Psoas muscle (tissue), 8 donors: ENCODE measurements at regions of chr18 and their contacts with region 1.

Region 1: DNA sequence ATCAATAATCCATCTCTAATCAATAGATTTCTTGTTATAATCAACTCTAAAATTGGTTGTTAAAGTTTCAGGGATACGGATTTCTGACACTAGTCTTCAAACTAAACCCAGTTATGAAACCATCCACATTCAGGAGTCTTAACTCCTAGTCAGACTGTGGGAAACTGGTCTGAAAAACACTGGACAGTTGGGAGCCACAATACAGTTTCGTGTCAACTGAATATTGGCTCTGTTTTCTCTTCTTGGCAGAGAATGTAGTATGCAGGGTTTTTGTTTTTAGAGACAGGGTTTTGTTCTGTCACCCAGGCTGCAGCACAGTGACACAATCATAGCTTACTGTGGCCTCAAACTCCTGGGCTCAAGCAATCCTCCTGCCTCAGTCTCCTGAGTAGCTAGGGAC is 123.1 kb downstream of the RTTN start:
- DNase-seq: no peak
- ATAC-seq: no peak
- H3K4me3 ChIP-seq: no peak overlapping the region
- H3K27ac ChIP-seq: no peak overlapping the region
- H3K4me1 ChIP-seq: no peaks in the 10 kb centered on the region
- H3K27me3 ChIP-seq: no peaks in the 10 kb centered on the region
- CTCF ChIP-seq: no peak

Region 2: GRCh38 chr18:68847219-68847837 is 1235.1 kb before region 1 on chr18:
- intact Hi-C with region 1: loop called in 1 of 2 experiments (anchors 10 kb)
- DNase-seq: no peak
- ATAC-seq: no peak
- H3K4me3 ChIP-seq: no peak overlapping the region
- H3K27ac ChIP-seq: no peak overlapping the region
- H3K4me1 ChIP-seq: no peaks in the 10 kb centered on the region
- H3K27me3 ChIP-seq: no peaks in the 10 kb centered on the region
- CTCF ChIP-seq: peak; percentile 45

Region 3: GRCh38 chr18:71989616-71990015 is 1907.2 kb after region 1 on chr18:
- intact Hi-C with region 1: no loop called
- DNase-seq: no peak
- ATAC-seq: no peak
- H3K4me3 ChIP-seq: no peak overlapping the region
- H3K27ac ChIP-seq: no peak overlapping the region
- H3K4me1 ChIP-seq: no peaks in the 10 kb centered on the region
- H3K27me3 ChIP-seq: no peaks in the 10 kb centered on the region
- CTCF ChIP-seq: no peak